CD8-positive, alpha-beta memory T cell (primary cell): ENCODE measurements at regions of chr12 and their contacts with region 1.

Region 1: GRCh38 chr12:100266835-100267618 is at the starts of genes DEPDC4 and SCYL2:
- DNase-seq: peak; percentile 87 to 97 (median 95)
- H3K4me3 ChIP-seq: peak within 1 kb of the TSS; percentile 92
- H3K4me3 Mint-ChIP-seq: peak within 1 kb of the TSS; percentile 94 to 100 (median 99)
- H3K27ac ChIP-seq: peak within 1 kb of the TSS; percentile 89
- H3K27ac Mint-ChIP-seq: peak within 1 kb of the TSS; percentile 85 to 100 (median 99)
- H3K4me1 ChIP-seq: peaks cover 35% of the 10 kb centered on the region
- H3K4me1 Mint-ChIP-seq: peaks cover 29 to 47% (median 42%) of the 10 kb centered on the region in 3 donors
- H3K27me3 ChIP-seq: no peaks in the 10 kb centered on the region
- H3K27me3 Mint-ChIP-seq: no peaks in the 10 kb centered on the region
- total RNA-seq, gene DEPDC4: 1.2 to 1.4 TPM
- total RNA-seq, gene SCYL2: 31.8 to 40.1 TPM

Region 2: DNA sequence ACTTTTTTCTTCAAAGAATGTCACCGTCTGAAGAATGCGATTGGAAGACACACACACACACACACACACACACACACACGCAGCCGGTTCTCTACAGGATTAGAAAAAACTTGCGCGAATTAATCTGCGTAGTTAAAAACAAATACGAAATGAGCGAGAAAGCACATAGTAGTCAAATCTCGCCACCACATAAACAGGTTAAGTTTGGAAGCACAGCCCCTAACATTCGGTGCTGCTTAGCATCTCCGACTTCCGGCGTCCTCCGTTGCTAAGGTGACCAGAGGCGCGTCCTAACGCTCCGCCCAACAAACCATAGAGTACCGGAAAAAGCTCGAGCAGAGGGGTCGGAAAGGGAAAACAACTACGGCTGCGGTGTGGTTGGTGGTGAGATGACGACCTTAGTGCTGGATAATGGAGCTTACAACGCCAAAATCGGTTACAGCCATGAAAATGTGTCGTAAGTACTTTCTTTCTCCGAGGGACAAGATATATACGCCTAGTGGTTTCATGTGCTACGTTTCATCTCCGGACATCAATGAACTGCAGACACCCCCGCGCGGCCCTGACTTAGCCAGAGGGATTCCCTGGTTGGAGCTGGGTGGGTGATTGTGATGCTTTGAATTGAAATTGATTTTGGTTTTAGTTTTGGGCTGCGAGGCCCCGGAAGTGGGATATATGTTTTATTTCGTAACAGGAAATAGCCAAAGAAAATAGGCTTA is 66.4 kb before region 1 on chr12 and contains the start of gene ACTR6:
- CTCF ChIA-PET with region 1: interaction called, 8 read pairs
- POLR2A ChIA-PET with region 1: interaction called, 23 read pairs
- DNase-seq: peak; percentile 96 to 99 (median 97)
- H3K4me3 ChIP-seq: peak within 1 kb of the TSS; percentile 91
- H3K4me3 Mint-ChIP-seq: peak within 1 kb of the TSS; percentile 93 to 100 (median 99)
- H3K27ac ChIP-seq: peak within 1 kb of the TSS; percentile 96
- H3K27ac Mint-ChIP-seq: peak within 1 kb of the TSS; percentile 89 to 100 (median 100)
- H3K4me1 ChIP-seq: peaks cover 31% of the 10 kb centered on the region
- H3K4me1 Mint-ChIP-seq: peaks cover 38 to 64% (median 53%) of the 10 kb centered on the region in 3 donors
- H3K27me3 ChIP-seq: no peaks in the 10 kb centered on the region
- H3K27me3 Mint-ChIP-seq: no peaks in the 10 kb centered on the region
- total RNA-seq, gene ACTR6: 35.1 to 36.6 TPM

Region 3: DNA sequence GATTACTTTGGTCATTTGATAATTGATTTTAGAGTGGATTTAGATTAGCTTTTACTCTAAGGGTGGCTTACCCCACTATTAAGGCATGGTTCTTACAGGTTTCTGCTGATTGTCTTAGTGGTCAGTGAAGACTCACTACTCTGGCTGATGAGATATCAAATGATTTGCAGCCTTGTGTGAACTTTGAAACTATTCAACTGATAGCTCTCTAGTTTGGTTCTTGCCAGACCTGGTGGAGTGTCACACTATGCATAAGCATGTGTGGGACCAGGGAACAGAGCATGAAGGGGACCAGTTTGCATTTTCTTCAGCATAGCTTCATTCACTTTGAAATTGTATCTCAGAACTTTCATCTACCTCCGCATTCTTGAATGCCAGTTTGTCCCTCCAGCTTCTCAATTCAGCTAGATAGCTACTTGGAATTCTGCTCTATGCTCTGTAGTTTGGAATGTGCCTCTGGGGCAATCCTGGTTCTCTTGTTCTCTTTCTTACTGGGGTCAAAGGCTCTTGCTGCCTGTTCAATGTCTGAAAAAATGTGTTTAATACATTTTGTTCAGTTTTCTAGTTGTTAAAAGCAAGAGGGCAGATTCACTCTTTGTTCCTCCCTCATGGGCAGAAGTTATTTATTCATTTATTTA is 12.7 kb after region 1 on chr12:
- CTCF ChIA-PET with region 1: interaction called, 4 read pairs
- POLR2A ChIA-PET with region 1: interaction called, 10 read pairs
- DNase-seq: no peak
- H3K4me3 ChIP-seq: no peak overlapping the region
- H3K4me3 Mint-ChIP-seq: no peak overlapping the region
- H3K27ac ChIP-seq: no peak overlapping the region
- H3K27ac Mint-ChIP-seq: no peak overlapping the region
- H3K4me1 ChIP-seq: peaks cover 6% of the 10 kb centered on the region
- H3K4me1 Mint-ChIP-seq: peaks cover 27 to 46% (median 44%) of the 10 kb centered on the region in 3 donors
- H3K27me3 ChIP-seq: no peaks in the 10 kb centered on the region
- H3K27me3 Mint-ChIP-seq: no peaks in the 10 kb centered on the region